ENCODE measurements at regions of chr19 and their contacts with region 1.

Region 1: DNA sequence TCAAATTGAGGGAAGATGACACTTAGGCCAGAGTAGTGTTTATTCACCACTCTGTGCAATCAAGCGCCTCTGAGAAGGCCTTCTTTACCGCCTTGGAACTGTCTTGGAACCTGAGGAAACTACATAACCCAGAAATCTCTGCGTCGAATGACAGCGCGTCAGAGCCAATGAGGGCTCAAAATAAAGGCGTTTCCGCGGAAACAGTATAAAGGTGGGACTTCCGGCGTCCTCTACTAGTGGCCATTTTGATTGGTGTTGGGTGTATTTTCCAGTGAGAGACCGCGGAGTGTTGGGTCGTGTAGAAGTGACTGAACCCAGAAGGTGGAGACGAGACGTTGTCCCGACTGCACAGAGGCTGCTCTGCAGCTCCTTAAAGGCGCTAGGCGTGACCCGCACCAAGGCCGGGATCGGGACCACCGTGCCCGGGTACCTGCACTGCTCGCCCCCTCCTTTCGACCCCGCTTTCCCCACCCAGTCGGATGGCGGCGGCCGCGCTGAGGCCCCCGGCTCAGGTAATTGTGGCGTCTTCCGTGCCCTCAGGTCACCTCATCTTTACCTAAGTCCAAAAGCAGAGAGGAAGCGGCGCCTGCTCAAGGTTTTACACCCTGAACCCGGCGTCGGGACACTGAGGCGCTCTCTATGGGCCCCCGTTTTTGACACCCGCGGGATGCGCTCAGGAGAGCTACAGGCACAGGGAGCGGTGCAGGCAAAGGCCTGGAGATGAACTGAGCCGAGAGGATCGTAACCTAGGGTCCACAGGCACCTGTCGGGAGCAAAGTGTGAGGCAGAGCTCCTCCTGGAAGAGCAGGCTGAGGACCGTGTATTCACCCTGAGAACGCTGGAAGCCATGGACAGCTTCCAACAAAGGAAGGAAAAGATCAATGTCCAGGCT is at the start of gene ZNF776:
- DNase-seq: peak; percentile 68 to 83
- ATAC-seq: peak; percentile 100
- H3K4me3 ChIP-seq: peak within 1 kb of the TSS; percentile 96 to 99 (median 97)
- H3K27ac ChIP-seq: peak within 1 kb of the TSS; percentile 84 to 98 (median 95)
- H3K4me1 ChIP-seq: peaks cover 23 to 38% of the 10 kb centered on the region in 2 donors
- H3K27me3 ChIP-seq: no peaks in the 10 kb centered on the region
- CTCF ChIP-seq: no peak
- POLR2A ChIP-seq: no peak
- total RNA-seq, gene ZNF776: 5.0 to 8.1 (median 8.0) TPM

Region 2: GRCh38 chr19:57240311-57241090 is 506.3 kb before region 1 on chr19 and contains the start of gene ZNF805:
- in situ Hi-C with region 1: no loop called
- intact Hi-C with region 1: loop called (anchors 1 kb)
- DNase-seq: peak; percentile 94 to 97
- ATAC-seq: peak; percentile 98 to 99
- H3K4me3 ChIP-seq: peak within 1 kb of the TSS; percentile 93 to 98 (median 97)
- H3K27ac ChIP-seq: peak within 1 kb of the TSS; percentile 89 to 97 (median 96)
- H3K4me1 ChIP-seq: peaks cover 23% of the 10 kb centered on the region in 2 donors
- H3K27me3 ChIP-seq: no peaks in the 10 kb centered on the region
- CTCF ChIP-seq: peak in 3 of 5 experiments; percentile 29 to 38 (median 36)
- POLR2A ChIP-seq: peak; percentile 62 to 67
- total RNA-seq, gene ZNF805: 9.3 to 20.2 (median 14.8) TPM

Region 3: GRCh38 chr19:57587529-57587928 is 159.3 kb before region 1 on chr19:
- in situ Hi-C with region 1: no loop called
- intact Hi-C with region 1: no loop called
- DNase-seq: no peak
- ATAC-seq: no peak
- H3K4me3 ChIP-seq: no peak overlapping the region
- H3K27ac ChIP-seq: no peak overlapping the region
- H3K4me1 ChIP-seq: peaks cover 10 to 14% of the 10 kb centered on the region in 2 donors
- H3K27me3 ChIP-seq: no peaks in the 10 kb centered on the region
- CTCF ChIP-seq: no peak
- POLR2A ChIP-seq: no peak

Region 4: GRCh38 chr19:57701625-57702024 is 45.2 kb before region 1 on chr19:
- in situ Hi-C with region 1: no loop called
- intact Hi-C with region 1: no loop called
- DNase-seq: no peak
- ATAC-seq: no peak
- H3K4me3 ChIP-seq: no peak overlapping the region
- H3K27ac ChIP-seq: no peak overlapping the region
- H3K4me1 ChIP-seq: no peaks in the 10 kb centered on the region
- H3K27me3 ChIP-seq: no peaks in the 10 kb centered on the region
- CTCF ChIP-seq: no peak
- POLR2A ChIP-seq: no peak

Region 5: GRCh38 chr19:57769345-57770131 is 22.7 kb after region 1 on chr19 and contains the start of gene ZNF586:
- in situ Hi-C with region 1: no loop called
- intact Hi-C with region 1: loop called (anchors 1 kb)
- DNase-seq: peak; percentile 89 to 91
- ATAC-seq: peak; percentile 96 to 97
- H3K4me3 ChIP-seq: peak within 1 kb of the TSS; percentile 87 to 100 (median 93)
- H3K27ac ChIP-seq: peak within 1 kb of the TSS; percentile 91 to 94 (median 92)
- H3K4me1 ChIP-seq: peaks cover 17 to 36% of the 10 kb centered on the region in 2 donors
- H3K27me3 ChIP-seq: no peaks in the 10 kb centered on the region
- CTCF ChIP-seq: no peak
- POLR2A ChIP-seq: peak; percentile 72 to 76
- total RNA-seq, gene ZNF586: 7.6 to 13.3 (median 9.2) TPM

Region 6: GRCh38 chr19:57802269-57802668 is 55.4 kb after region 1 on chr19:
- in situ Hi-C with region 1: no loop called
- intact Hi-C with region 1: no loop called
- DNase-seq: no peak
- ATAC-seq: no peak
- H3K4me3 ChIP-seq: no peak overlapping the region
- H3K27ac ChIP-seq: peak overlapping the region in 1 of 4 donors; percentile 77
- H3K4me1 ChIP-seq: peaks cover 9 to 33% of the 10 kb centered on the region in 2 donors
- H3K27me3 ChIP-seq: no peaks in the 10 kb centered on the region
- CTCF ChIP-seq: no peak
- POLR2A ChIP-seq: no peak

Region 7: GRCh38 chr19:57814505-57815251 is 67.9 kb after region 1 on chr19 and contains the start of gene ZNF552:
- in situ Hi-C with region 1: no loop called
- intact Hi-C with region 1: loop called (anchors 5 kb)
- DNase-seq: peak; percentile 78 to 87
- ATAC-seq: peak; percentile 96 to 97
- H3K4me3 ChIP-seq: peak within 1 kb of the TSS; percentile 66 to 89 (median 75)
- H3K27ac ChIP-seq: peak within 1 kb of the TSS; percentile 75 to 90 (median 84)
- H3K4me1 ChIP-seq: peaks cover 20 to 24% of the 10 kb centered on the region in 2 donors
- H3K27me3 ChIP-seq: no peaks in the 10 kb centered on the region
- CTCF ChIP-seq: no peak
- POLR2A ChIP-seq: peak; percentile 70 to 80
- total RNA-seq, gene ZNF552: 1.2 to 2.3 (median 1.8) TPM

Region 8: GRCh38 chr19:57830071-57830602 is 83.3 kb after region 1 on chr19 and contains the start of gene ZNF587B:
- in situ Hi-C with region 1: loop called in 1 of 4 experiments (anchors 25 kb)
- intact Hi-C with region 1: no loop called
- DNase-seq: peak; percentile 5 to 72
- ATAC-seq: peak; percentile 91 to 93
- H3K4me3 ChIP-seq: peak within 1 kb of the TSS; percentile 43 to 58 (median 46)
- H3K27ac ChIP-seq: peak within 1 kb of the TSS; percentile 69 to 81 (median 77)
- H3K4me1 ChIP-seq: peaks cover 3 to 6% of the 10 kb centered on the region in 2 donors
- H3K27me3 ChIP-seq: no peaks in the 10 kb centered on the region
- CTCF ChIP-seq: peak; percentile 27 to 46 (median 42)
- POLR2A ChIP-seq: no peak
- total RNA-seq, gene ZNF587B: 2.1 to 9.6 (median 6.3) TPM

Region 9: GRCh38 chr19:57903618-57904184 is 156.9 kb after region 1 on chr19:
- in situ Hi-C with region 1: loop called in 2 of 4 experiments (anchors 25 kb)
- intact Hi-C with region 1: no loop called
- DNase-seq: no peak
- ATAC-seq: no peak
- H3K4me3 ChIP-seq: no peak overlapping the region
- H3K27ac ChIP-seq: no peak overlapping the region
- H3K4me1 ChIP-seq: peaks cover 0 to 4% of the 10 kb centered on the region in 2 donors
- H3K27me3 ChIP-seq: no peaks in the 10 kb centered on the region
- CTCF ChIP-seq: no peak
- POLR2A ChIP-seq: no peak

Region 10: GRCh38 chr19:57914531-57914930 is 167.7 kb after region 1 on chr19:
- in situ Hi-C with region 1: loop called in 2 of 4 experiments (anchors 25 kb)
- intact Hi-C with region 1: loop called (anchors 1 kb)
- DNase-seq: no peak
- ATAC-seq: no peak
- H3K4me3 ChIP-seq: no peak overlapping the region
- H3K27ac ChIP-seq: no peak overlapping the region
- H3K4me1 ChIP-seq: peaks cover 10 to 11% of the 10 kb centered on the region in 2 donors
- H3K27me3 ChIP-seq: no peaks in the 10 kb centered on the region
- CTCF ChIP-seq: no peak
- POLR2A ChIP-seq: no peak